Heart left ventricle (tissue), 16 donors: ENCODE measurements at regions of chr16 and their contacts with region 1.

Region 1: GRCh38 chr16:58481931-58482330 is 18.0 kb upstream of the NDRG4 start:
- DNase-seq: peak in 1 of 5 donors; percentile 38
- ATAC-seq: peak; percentile 13 to 33 (median 24)
- H3K4me3 ChIP-seq: no peak overlapping the region
- H3K27ac ChIP-seq: peak overlapping the region in 11 of 12 donors; percentile 5 to 60 (median 53)
- H3K4me1 ChIP-seq: peaks cover 0 to 84% (median 48%) of the 10 kb centered on the region in 12 donors
- H3K27me3 ChIP-seq: no peaks in the 10 kb centered on the region
- CTCF ChIP-seq: no peak
- POLR2A ChIP-seq: no peak

Region 2: GRCh38 chr16:58409316-58409973 is 72.5 kb before region 1 on chr16:
- intact Hi-C with region 1: loop called in 2 of 10 experiments (anchors 5 kb)
- DNase-seq: peak in 4 of 5 donors; percentile 46 to 75 (median 63)
- ATAC-seq: peak; percentile 48 to 81 (median 76)
- H3K4me3 ChIP-seq: no peak overlapping the region
- H3K27ac ChIP-seq: peak overlapping the region; percentile 31 to 98 (median 82)
- H3K4me1 ChIP-seq: peaks cover 0 to 49% (median 8%) of the 10 kb centered on the region in 12 donors
- H3K27me3 ChIP-seq: no peaks in the 10 kb centered on the region
- CTCF ChIP-seq: no peak
- POLR2A ChIP-seq: no peak

Region 3: DNA sequence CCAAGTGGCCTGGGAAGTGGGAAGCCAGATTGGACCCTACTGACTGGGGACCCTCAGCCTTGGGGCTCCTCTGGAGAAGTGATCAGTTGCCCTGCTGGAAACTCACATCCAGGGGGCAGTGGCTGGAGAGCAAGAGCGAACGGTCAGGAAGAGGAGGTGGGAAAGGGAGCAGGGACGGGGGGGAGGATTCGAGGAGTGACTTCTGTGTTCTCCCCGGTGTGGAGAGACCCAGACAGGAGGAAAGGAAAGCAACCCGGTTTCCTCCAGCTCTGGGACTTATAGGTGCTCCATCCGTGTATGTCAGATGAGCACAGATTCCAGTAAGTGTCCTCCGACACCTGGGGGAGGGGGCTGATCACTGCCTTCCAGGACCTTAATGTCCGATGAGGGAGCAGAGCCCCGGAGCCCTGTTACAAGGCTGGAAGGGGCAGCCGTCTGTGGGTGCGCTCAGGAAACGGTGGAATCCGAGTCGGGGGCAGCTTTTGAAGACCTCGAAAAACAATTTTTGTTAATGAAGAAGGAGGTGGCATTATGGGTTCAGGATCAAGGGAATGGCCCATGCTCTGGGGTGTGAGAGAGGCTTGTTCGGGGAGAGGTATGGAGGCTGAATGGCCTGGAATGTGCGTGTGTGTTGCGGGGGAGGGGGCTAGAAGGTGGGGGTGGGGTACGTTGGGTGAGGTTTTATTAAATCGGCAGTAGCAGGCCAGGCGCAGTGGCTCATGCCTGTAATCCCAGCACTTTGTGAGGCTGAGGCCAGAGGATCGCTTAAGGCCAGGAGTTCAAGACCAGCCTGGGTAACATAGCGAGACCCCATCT is 16.8 kb before region 1 on chr16:
- intact Hi-C with region 1: loop called in 4 of 10 experiments (anchors 2 kb)
- DNase-seq: peak in 3 of 5 donors; percentile 55 to 65 (median 60)
- ATAC-seq: peak in 3 of 4 donors; percentile 16 to 56 (median 18)
- H3K4me3 ChIP-seq: peak overlapping the region; percentile 65 to 95 (median 83)
- H3K27ac ChIP-seq: peak overlapping the region; percentile 69 to 99 (median 93)
- H3K4me1 ChIP-seq: peaks cover 1 to 60% (median 20%) of the 10 kb centered on the region in 12 donors
- H3K27me3 ChIP-seq: peaks cover 0 to 62% (median 0%) of the 10 kb centered on the region in 9 donors
- CTCF ChIP-seq: peak in 8 of 12 donors; percentile 14 to 49 (median 30)
- POLR2A ChIP-seq: no peak